HEK293 (cell line): ENCODE measurements at regions of chr10 and their contacts with region 1.

Region 1: GRCh38 chr10:33115738-33116719 is 158.0 kb upstream of the ITGB1 start:
- H3K4me3 ChIP-seq: no peak overlapping the region
- H3K27ac ChIP-seq: no peak overlapping the region
- H3K4me1 ChIP-seq: no peaks in the 10 kb centered on the region
- CTCF ChIP-seq: no peak

Region 2: GRCh38 chr10:33032654-33033151 is 83.3 kb before region 1 on chr10:
- CTCF ChIA-PET with region 1: no interaction called
- POLR2A ChIA-PET with region 1: no interaction called
- H3K4me3 ChIP-seq: no peak overlapping the region
- H3K27ac ChIP-seq: no peak overlapping the region
- H3K4me1 ChIP-seq: no peaks in the 10 kb centered on the region
- CTCF ChIP-seq: no peak

Region 3: GRCh38 chr10:33103863-33104379 is 12.1 kb before region 1 on chr10:
- CTCF ChIA-PET with region 1: interaction called, 11 read pairs
- POLR2A ChIA-PET with region 1: no interaction called
- H3K4me3 ChIP-seq: no peak overlapping the region
- H3K27ac ChIP-seq: no peak overlapping the region
- H3K4me1 ChIP-seq: no peaks in the 10 kb centered on the region
- CTCF ChIP-seq: no peak

Region 4: DNA sequence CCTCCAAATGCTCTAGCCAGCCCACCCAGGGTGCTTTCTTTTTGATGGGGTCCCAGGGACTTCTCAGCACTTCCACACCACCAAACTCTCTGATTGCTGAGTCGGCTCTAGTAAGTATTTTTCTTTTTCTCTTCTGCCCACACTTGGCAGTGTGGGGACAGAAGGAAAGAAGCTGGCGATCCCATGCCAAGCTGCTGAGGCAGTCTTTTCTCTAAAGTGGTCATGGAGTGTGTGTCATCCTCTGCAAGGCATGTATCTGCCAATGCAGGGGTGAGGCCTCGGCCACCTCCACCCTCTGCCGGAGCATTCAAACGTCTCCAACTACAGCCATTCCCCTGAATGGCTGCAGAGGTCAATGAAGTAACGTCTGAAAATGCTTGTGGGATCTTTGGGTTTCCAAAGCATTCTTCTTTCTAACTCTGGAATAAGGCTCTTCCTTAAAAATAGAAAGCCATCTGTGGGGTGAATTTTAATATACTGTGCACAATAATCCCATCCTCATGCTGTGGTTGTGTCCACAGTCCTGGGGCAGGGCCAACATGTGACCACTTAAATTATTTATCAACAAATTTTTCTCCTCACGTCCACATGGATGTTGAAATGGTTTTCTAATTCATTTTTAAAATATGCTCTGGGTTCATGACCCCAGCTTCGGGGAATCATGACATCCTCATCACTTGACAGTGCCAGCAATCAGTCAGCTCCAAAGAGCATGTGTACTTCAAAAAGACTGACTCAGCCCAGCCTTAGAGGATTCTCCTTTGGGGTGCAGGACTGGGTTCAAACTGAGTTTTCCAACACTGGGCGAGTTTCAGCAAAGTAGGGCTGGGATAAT is 13.3 kb after region 1 on chr10:
- CTCF ChIA-PET with region 1: interaction called, 12 read pairs
- POLR2A ChIA-PET with region 1: no interaction called
- H3K4me3 ChIP-seq: no peak overlapping the region
- H3K27ac ChIP-seq: no peak overlapping the region
- H3K4me1 ChIP-seq: 0 out of 2 replicates have a peak, but pooled peaks cover 3% of the 10 kb centered on the region
- CTCF ChIP-seq: no peak